Activated CD8-positive, alpha-beta T cell treated with anti-CD3 and anti-CD28 coated beads, Interleukin-2, amount 10 ng/mL, durations not matched to agents 7 days and 5 days (primary cell): ENCODE measurements at regions of chr12 and their contacts with region 1.

Region 1: GRCh38 chr12:62799126-62799736 is 135.7 kb downstream of the PPM1H start:
- DNase-seq: peak; percentile 75
- ATAC-seq: peak; percentile 94
- H3K4me3 Mint-ChIP-seq: no peak overlapping the region
- H3K27ac Mint-ChIP-seq: no peak overlapping the region
- H3K4me1 Mint-ChIP-seq: no peaks in the 10 kb centered on the region
- H3K27me3 Mint-ChIP-seq: peaks cover 12% of the 10 kb centered on the region

Region 2: DNA sequence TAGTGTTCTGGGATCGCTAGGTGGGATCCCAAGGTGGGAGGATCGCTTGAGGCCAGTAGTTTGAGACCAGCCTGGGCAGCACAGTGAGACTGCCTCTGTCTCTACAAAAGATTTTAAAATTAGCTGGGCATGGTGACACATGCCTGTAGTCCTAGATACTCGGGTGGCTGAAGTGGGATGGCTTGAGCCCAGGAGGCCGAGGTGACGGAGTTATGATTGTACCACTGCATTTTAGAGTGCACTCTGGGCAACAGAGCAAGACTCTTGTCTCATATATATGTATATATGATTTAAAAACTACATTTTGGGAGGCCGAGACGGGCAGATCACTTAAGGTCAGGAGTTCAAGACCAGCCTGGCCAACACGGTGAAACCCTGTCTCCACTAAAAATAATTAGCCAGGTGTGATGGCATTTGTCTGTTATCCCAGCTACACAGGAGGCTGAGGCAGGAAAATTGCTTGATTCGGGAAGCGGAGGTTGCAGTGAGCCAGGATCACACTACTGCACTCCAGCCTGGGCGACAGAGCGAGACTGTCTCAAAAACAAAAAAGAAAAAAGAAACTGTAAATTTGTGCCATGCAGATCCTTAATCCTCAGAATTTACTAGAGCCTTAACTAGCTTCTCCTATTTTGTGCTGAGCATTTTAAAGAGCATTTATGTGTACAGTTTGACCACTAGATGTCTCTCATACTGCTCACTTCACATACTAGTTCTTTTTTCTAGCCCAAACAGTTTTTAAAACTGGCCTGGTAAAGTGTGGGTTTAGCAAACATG is 217.8 kb before region 1 on chr12:
- CTCF ChIA-PET with region 1: interaction called, 104 read pairs
- POLR2A ChIA-PET with region 1: no interaction called
- DNase-seq: no peak
- ATAC-seq: peak; percentile 53
- H3K4me3 Mint-ChIP-seq: no peak overlapping the region
- H3K27ac Mint-ChIP-seq: no peak overlapping the region
- H3K4me1 Mint-ChIP-seq: no peaks in the 10 kb centered on the region
- H3K27me3 Mint-ChIP-seq: no peaks in the 10 kb centered on the region

Region 3: GRCh38 chr12:62813031-62813829 is 14.0 kb after region 1 on chr12:
- CTCF ChIA-PET with region 1: interaction called, 42 read pairs
- POLR2A ChIA-PET with region 1: no interaction called
- DNase-seq: peak; percentile 52
- ATAC-seq: peak; percentile 55
- H3K4me3 Mint-ChIP-seq: peak overlapping the region; percentile 38
- H3K27ac Mint-ChIP-seq: no peak overlapping the region
- H3K4me1 Mint-ChIP-seq: peaks cover 21% of the 10 kb centered on the region
- H3K27me3 Mint-ChIP-seq: peaks cover 24% of the 10 kb centered on the region

Region 4: DNA sequence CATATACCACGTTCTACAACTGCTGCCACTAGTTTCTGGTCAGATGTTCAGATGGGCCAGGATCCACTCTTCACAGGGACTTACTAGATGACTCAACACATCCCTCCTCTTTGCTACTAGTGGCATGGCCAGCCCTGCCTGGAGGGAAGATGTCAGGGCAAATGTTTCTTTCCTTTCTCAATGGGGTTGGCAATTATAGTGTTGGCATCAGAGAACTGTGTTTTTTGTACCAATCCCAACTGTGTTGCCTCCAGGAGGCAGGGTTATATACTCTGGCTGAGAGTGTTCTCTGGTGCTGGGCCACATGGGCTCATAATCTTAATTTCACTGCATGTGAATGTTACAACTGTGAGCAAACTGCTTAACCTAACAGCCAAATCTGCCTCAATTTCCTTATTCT is 421.7 kb after region 1 on chr12:
- CTCF ChIA-PET with region 1: no interaction called
- POLR2A ChIA-PET with region 1: no interaction called
- DNase-seq: no peak
- ATAC-seq: no peak
- H3K4me3 Mint-ChIP-seq: no peak overlapping the region
- H3K27ac Mint-ChIP-seq: no peak overlapping the region
- H3K4me1 Mint-ChIP-seq: no peaks in the 10 kb centered on the region
- H3K27me3 Mint-ChIP-seq: no peaks in the 10 kb centered on the region